Left cardiac atrium (tissue), 4 donors: ENCODE measurements at regions of chr17 and their contacts with region 1.

Region 1: GRCh38 chr17:60435244-60436167 is 13.2 kb downstream of the CHCT1 start:
- DNase-seq: peak; percentile 70
- ATAC-seq: peak; percentile 87 to 94

Region 2: DNA sequence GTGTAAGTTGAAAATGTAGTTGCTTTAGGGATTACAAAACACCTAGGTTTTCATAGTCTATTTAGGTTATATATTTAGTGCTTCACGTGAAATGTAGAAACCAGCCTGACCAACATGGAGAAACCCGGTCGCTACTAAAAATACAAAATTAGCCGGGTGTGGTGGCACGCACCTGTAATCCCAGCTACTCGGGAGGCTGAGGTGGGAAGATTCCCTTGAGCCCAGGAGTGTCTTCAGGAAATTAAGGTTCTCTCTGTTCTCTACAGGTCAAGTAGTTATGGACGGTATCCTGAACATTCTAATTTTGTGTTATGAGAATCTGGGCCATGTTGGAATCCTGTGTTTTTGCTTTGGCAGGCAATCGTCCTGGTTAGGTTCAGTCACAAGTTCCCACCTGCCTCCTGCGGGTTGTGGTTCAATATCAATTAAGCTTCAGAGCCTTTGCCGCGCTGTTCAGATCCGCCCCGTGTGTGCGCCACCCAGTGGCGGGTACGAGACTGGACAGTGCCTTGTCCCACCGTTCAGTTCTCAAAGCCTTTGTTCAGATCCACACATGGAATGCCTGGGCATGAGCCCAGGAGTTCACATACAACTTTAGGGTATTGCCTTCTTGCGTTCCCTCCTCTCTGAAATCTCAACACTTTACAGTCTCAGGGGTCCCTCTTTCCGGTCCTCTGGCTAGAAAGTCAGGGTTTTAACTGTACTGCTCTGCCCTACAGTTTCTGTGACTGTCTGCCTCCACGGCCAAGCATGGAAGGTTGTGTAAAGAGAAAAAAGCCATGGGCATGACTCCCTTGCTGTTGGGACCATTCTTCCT is 398.5 kb before region 1 on chr17:
- intact Hi-C with region 1: loop called in 1 of 2 experiments (anchors 5 kb)
- DNase-seq: peak; percentile 69
- ATAC-seq: peak; percentile 88

Region 3: GRCh38 chr17:60102632-60103096 is 332.8 kb before region 1 on chr17:
- intact Hi-C with region 1: loop called in 1 of 2 experiments (anchors 10 kb)
- DNase-seq: peak; percentile 27
- ATAC-seq: peak; percentile 75 to 80

Region 4: DNA sequence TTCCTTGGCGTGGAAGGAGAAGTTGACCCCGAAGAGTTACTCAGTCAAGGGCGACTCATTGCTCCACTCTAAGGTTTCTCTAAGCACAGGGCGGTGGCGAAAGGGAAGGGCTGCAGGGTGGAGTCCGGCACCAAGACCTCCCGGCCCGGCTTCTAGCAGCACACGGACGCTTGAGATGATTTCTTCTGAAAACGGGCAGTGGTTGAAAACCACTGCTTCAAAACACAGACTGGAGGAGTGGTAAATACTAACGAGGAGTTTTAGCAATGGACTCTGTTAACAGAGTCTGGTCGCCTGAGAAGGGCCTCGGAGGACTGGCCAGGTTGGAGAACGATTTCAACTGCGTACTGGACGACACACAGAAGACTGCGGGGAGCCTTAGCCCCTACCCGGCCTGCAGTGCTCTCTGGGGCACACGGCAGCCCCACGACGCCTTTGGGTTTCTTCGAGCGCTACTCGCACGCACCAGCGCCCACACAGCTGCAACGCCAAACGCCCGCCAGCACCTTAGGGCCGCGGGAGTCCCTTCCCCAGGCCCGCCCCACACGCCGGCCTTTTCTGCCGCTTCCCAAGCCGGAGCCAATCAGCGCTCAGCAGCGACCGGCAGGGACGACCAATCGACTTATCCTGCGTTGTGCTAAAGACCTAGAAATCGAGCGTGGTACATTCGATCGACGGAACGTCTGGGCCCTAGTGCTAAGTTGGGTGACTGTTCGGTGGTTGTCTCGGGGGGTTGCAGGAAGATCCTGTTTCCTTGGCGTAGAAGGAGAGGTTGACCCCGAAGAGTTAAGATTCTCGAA is 300.2 kb before region 1 on chr17:
- intact Hi-C with region 1: loop called in 1 of 2 experiments (anchors 10 kb)
- DNase-seq: peak; percentile 90
- ATAC-seq: peak; percentile 97 to 98

Region 5: DNA sequence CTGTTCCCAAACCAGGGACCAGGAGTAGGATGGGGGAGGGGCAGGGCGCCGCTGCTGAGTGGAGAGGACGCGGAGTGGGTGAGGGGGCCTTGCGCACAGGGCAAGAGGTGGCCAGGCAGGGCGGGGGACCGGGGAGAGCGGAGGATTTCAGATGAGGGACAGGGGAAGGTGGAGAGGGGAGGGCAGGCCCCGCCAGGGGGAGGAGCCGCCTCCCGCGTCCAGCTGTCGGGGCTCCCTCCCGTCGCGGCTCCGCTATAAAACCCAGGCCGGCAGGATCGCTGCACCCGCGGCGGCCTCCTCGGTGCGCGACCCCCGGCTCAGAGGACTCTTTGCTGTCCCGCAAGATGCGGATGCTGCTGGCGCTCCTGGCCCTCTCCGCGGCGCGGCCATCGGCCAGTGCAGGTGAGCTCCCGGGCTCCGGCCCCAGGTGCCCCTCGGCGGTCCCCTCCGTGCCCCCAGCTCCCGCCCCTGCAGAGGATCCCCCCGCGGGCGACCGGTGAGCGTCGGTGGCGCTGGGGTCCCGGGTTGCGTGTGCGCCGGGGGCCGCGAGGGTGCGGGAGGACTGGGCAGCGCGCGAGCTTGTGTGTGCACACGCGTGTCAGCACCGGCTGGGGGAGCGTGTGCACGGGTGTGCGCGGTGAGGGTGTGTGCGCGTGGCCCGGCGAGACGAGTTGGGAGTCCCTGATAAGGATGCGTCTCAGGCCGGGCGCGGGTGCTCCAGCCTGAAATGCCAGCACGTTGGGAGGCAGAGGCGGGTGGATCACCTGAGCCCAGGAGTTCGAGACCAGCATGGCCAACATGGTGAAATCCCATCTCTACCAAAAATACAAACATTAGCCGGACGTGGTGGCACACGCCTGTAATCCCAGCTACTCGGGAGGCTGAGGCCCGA is 285.6 kb before region 1 on chr17 and contains the start of gene CA4:
- intact Hi-C with region 1: loop called in 1 of 2 experiments (anchors 5 kb)
- DNase-seq: peak; percentile 26
- ATAC-seq: peak; percentile 37 to 46
- total RNA-seq, gene CA4: 3.1 to 10.8 TPM

Region 6: GRCh38 chr17:60231234-60231633 is 204.3 kb before region 1 on chr17:
- intact Hi-C with region 1: loop called in 1 of 2 experiments (anchors 10 kb)
- DNase-seq: no peak
- ATAC-seq: peak in 1 of 2 donors; percentile 24

Region 7: GRCh38 chr17:60535463-60535862 is 100.0 kb after region 1 on chr17:
- intact Hi-C with region 1: no loop called
- DNase-seq: no peak
- ATAC-seq: no peak

Region 8: GRCh38 chr17:60599620-60600489 is 164.3 kb after region 1 on chr17 and contains the start of gene PPM1D:
- intact Hi-C with region 1: no loop called
- DNase-seq: peak; percentile 100
- ATAC-seq: peak; percentile 98
- total RNA-seq, gene PPM1D: 9.0 to 10.2 TPM